ENCODE measurements at regions of chr16 and their contacts with region 1.

Region 1: GRCh38 chr16:578870-579405 is 9.2 kb downstream of the PIGQ start:
- DNase-seq: peak; percentile 64 to 94
- H3K4me3 ChIP-seq: peak overlapping the region in 3 of 4 experiments; percentile 18 to 47 (median 29); a peak in 5 of 8 replicates
- H3K27ac ChIP-seq: no peak overlapping the region
- H3K4me1 ChIP-seq: peaks cover 0 to 16% (median 12%) of the 10 kb centered on the region in 4 experiments; a peak in 6 of 7 replicates
- H3K27me3 ChIP-seq: peaks cover 0 to 2% (median 0%) of the 10 kb centered on the region in 4 experiments; a peak in 2 of 7 replicates
- CTCF ChIP-seq: peak in 2 of 3 experiments; percentile 90 to 96; a peak in 3 of 4 replicates
- EP300 ChIP-seq: no peak
- POLR2A ChIP-seq: no peak
- RAD21 ChIP-seq: peak; percentile 83 to 86

Region 2: DNA sequence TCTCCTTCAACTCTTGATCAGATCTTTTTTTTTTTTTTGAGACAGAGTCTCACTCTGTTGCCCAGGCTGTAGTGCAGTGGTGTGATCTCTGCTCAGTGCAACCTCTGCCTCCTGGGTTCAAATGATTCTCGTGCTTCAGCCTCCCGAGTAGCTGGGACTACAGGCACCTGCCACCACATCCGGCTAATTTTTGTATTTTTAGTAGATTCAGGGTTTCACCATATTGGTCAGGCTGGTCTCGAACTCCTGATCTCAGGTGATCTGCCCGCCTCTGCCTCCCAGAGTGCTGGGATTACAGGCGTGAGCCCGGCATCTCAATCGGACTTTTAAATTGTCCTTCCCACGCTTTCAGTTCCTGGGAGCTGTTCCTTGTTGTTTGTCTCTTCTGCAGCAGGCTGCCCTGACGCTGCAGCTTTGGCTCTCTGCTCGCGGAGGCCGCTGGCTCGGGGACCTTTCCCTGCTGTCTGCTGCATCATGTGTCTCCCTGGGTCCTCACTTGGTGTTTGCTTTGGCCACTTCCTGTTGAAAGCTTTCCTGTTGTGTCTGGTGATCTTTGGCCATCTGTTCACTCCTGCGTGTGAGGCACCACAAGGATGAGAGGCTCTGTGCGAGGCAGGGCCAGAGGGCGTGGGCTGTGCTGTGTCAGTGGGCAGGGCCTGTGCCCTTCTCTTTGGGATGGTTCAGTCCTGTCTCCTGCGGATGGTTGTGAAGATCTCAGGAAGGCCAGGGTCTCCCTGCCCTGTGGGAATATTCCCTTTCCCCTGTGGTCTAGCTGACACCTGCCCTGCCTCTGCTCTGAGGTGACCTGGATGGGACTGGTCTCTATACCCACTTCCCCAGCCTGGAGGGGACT is 69.8 kb before region 1 on chr16:
- CTCF ChIA-PET with region 1: no interaction called
- POLR2A ChIA-PET with region 1: no interaction called
- DNase-seq: no peak
- H3K4me3 ChIP-seq: no peak overlapping the region
- H3K27ac ChIP-seq: no peak overlapping the region; the same call in 1 of the 2 replicates
- H3K4me1 ChIP-seq: no peaks in the 10 kb centered on the region; a peak in 1 of 7 replicates
- H3K27me3 ChIP-seq: no peaks in the 10 kb centered on the region
- CTCF ChIP-seq: no peak
- EP300 ChIP-seq: no peak
- POLR2A ChIP-seq: no peak
- RAD21 ChIP-seq: no peak

Region 3: DNA sequence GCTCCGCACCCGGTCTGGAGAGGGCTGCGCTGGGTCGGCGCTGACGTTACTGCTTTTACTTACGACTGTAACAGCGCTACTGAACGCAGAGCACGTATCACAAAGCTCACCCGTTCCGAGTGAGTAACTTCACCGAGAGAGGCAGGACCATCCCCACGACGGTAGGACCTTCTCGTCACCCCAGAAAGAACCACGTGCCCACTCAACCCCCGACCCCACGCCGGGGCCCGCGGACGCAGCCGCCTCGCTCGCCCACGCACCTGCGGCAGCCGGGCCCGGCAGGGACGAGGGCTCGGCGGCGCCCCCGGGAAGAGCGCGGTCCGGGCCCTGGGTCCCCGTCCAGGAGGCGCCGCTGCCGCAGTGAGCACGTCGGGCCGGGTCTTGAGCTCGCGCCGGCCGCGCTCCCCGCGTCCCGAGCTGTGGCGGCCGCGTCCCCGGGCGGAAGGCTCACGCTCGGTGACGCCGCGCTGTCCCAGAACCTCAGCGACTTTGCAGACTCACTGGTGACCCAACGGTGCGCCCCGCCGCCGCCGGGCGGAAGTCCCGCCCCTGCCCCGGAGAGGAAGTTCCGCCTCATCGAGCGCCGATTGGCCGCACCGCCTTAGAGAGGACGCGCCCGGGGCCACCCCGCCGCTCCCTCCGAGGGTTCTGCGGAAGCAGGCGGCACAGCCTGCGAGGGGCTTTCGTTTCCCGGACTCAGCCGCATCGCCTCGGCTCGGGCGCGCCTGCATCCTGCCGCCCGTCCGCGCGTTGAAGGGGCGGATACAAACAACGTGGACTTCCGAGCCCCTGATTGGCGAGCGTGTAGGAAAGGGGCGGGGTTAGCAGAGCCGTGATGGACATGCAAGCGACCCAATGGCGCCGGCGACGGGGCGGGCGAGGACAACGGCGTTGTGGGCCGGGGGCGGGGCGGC is 10.1 kb after region 1 on chr16:
- CTCF ChIA-PET with region 1: interaction called, 30 read pairs
- POLR2A ChIA-PET with region 1: interaction called, 9 read pairs
- DNase-seq: peak; percentile 73 to 100
- H3K4me3 ChIP-seq: peak overlapping the region; percentile 90 to 94 (median 91)
- H3K27ac ChIP-seq: peak overlapping the region; percentile 99
- H3K4me1 ChIP-seq: peaks cover 0 to 20% (median 11%) of the 10 kb centered on the region in 4 experiments; a peak in 6 of 7 replicates
- H3K27me3 ChIP-seq: peaks cover 0 to 45% (median 29%) of the 10 kb centered on the region in 4 experiments; a peak in 5 of 7 replicates
- CTCF ChIP-seq: no peak
- EP300 ChIP-seq: no peak
- POLR2A ChIP-seq: peak in 1 of 2 experiments; percentile 55; a peak in 2 of 3 replicates
- RAD21 ChIP-seq: no peak

Region 4: GRCh38 chr16:610513-611334 is 31.8 kb after region 1 on chr16:
- CTCF ChIA-PET with region 1: interaction called, 11 read pairs
- POLR2A ChIA-PET with region 1: no interaction called
- DNase-seq: peak in 1 of 2 experiments; percentile 91
- H3K4me3 ChIP-seq: no peak overlapping the region
- H3K27ac ChIP-seq: no peak overlapping the region
- H3K4me1 ChIP-seq: no peaks in the 10 kb centered on the region; a peak in 1 of 7 replicates
- H3K27me3 ChIP-seq: no peaks in the 10 kb centered on the region
- CTCF ChIP-seq: peak; percentile 91 to 97 (median 92)
- EP300 ChIP-seq: no peak
- POLR2A ChIP-seq: no peak
- RAD21 ChIP-seq: peak; percentile 74 to 87

Region 5: GRCh38 chr16:636206-637080 is 57.5 kb after region 1 on chr16 and contains the start of gene METTL26:
- CTCF ChIA-PET with region 1: interaction called, 5 read pairs
- POLR2A ChIA-PET with region 1: interaction called, 10 read pairs
- DNase-seq: peak in 1 of 2 experiments; percentile 96
- H3K4me3 ChIP-seq: peak within 1 kb of the TSS; percentile 73 to 89 (median 77)
- H3K27ac ChIP-seq: peak within 1 kb of the TSS; percentile 35; the same call in 1 of the 2 replicates
- H3K4me1 ChIP-seq: peaks cover 0 to 29% (median 19%) of the 10 kb centered on the region in 4 experiments; a peak in 6 of 7 replicates
- H3K27me3 ChIP-seq: no peaks in the 10 kb centered on the region
- CTCF ChIP-seq: no peak
- EP300 ChIP-seq: no peak
- POLR2A ChIP-seq: peak in 1 of 2 experiments; percentile 51; a peak in 2 of 3 replicates
- RAD21 ChIP-seq: 0 out of 4 replicates have a peak, but pooled peaks of 1 of the 2 experiments have one; percentile 0
- total RNA-seq, gene METTL26: 100 and 108 TPM in 2 replicates

Measured in H1 (cell line).